Heart left ventricle (tissue), 16 donors: ENCODE measurements at regions of chr9 and their contacts with region 1.

Region 1: GRCh38 chr9:124133727-124134126 is 122.2 kb downstream of the LHX2 start:
- DNase-seq: peak in 4 of 5 donors; percentile 36 to 70 (median 44)
- ATAC-seq: peak; percentile 55 to 90 (median 74)
- H3K4me3 ChIP-seq: no peak overlapping the region
- H3K27ac ChIP-seq: no peak overlapping the region
- H3K4me1 ChIP-seq: no peaks in the 10 kb centered on the region
- H3K27me3 ChIP-seq: no peaks in the 10 kb centered on the region
- CTCF ChIP-seq: peak in 9 of 12 donors; percentile 21 to 55 (median 45)
- POLR2A ChIP-seq: no peak

Region 2: DNA sequence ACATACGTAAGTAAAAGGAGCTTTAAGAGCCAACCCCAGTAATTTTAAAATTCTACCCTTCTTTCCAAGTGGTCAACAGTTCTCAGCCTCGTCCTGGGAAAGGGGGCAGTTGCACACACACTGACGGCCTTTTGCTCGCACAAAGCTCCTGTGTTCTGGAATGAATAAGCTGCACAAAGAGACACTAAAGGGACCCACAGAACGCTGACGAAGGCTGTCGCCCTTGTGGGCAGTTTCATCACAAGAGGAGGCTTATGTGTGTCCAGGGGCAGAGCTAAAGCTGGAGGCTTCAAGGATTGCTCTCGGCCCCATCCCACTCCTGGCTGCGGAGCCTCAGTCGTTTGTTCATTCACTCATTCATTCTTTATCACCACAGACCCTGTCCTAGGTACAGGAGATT is 57.0 kb after region 1 on chr9:
- intact Hi-C with region 1: no loop called
- DNase-seq: no peak
- ATAC-seq: no peak
- H3K4me3 ChIP-seq: no peak overlapping the region
- H3K27ac ChIP-seq: no peak overlapping the region
- H3K4me1 ChIP-seq: no peaks in the 10 kb centered on the region
- H3K27me3 ChIP-seq: peaks cover 0 to 7% (median 0%) of the 10 kb centered on the region in 9 donors
- CTCF ChIP-seq: no peak
- POLR2A ChIP-seq: no peak

Region 3: GRCh38 chr9:124257844-124258606 is 124.3 kb after region 1 on chr9 and contains the start of gene NEK6:
- intact Hi-C with region 1: loop called in 1 of 10 experiments (anchors 10 kb)
- DNase-seq: peak in 3 of 5 donors; percentile 51 to 76 (median 57)
- ATAC-seq: peak; percentile 14 to 62 (median 46)
- H3K4me3 ChIP-seq: peak within 1 kb of the TSS; percentile 56 to 98 (median 74)
- H3K27ac ChIP-seq: peak within 1 kb of the TSS; percentile 27 to 96 (median 68)
- H3K4me1 ChIP-seq: peaks cover 0 to 61% (median 26%) of the 10 kb centered on the region in 12 donors
- H3K27me3 ChIP-seq: no peaks in the 10 kb centered on the region
- CTCF ChIP-seq: no peak
- POLR2A ChIP-seq: no peak
- total RNA-seq, gene NEK6: 5.0 to 42.4 (median 6.8) TPM

Region 4: DNA sequence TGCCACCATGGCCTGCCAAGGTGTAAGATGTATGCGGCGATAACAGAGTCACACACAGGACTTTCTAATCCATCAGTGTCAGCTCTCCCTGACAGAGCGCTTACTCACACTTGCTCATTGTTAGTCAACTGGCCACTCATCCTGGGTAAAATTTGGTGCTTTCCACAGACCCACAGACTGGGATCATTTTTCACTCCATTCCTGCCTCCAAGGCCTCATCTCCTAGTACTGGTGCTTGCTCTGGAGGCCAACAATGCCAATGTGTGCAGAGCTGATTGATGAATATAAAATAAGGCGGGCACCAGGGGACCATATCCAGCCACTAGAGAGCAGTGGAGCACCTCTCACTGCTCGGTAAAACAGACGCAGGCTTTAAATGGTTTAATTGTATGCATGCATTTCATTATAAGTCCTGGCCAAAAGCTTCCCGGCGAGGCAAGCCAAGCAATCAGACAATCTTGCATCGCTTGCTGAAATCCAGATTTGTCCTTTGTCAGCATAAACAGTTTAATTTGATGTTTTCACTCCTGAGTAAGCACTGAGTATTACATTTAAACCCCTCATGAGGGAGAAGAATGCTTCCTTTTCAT is 259.2 kb after region 1 on chr9:
- intact Hi-C with region 1: loop called in 7 of 10 experiments (anchors 5 to 10 kb)
- DNase-seq: no peak
- ATAC-seq: no peak
- H3K4me3 ChIP-seq: no peak overlapping the region
- H3K27ac ChIP-seq: no peak overlapping the region
- H3K4me1 ChIP-seq: peaks cover 0 to 79% (median 38%) of the 10 kb centered on the region in 12 donors
- H3K27me3 ChIP-seq: no peaks in the 10 kb centered on the region
- CTCF ChIP-seq: peak in 1 of 12 donors; percentile 12
- POLR2A ChIP-seq: no peak